ENCODE measurements at regions of chr22 and their contacts with region 1.

Region 1: DNA sequence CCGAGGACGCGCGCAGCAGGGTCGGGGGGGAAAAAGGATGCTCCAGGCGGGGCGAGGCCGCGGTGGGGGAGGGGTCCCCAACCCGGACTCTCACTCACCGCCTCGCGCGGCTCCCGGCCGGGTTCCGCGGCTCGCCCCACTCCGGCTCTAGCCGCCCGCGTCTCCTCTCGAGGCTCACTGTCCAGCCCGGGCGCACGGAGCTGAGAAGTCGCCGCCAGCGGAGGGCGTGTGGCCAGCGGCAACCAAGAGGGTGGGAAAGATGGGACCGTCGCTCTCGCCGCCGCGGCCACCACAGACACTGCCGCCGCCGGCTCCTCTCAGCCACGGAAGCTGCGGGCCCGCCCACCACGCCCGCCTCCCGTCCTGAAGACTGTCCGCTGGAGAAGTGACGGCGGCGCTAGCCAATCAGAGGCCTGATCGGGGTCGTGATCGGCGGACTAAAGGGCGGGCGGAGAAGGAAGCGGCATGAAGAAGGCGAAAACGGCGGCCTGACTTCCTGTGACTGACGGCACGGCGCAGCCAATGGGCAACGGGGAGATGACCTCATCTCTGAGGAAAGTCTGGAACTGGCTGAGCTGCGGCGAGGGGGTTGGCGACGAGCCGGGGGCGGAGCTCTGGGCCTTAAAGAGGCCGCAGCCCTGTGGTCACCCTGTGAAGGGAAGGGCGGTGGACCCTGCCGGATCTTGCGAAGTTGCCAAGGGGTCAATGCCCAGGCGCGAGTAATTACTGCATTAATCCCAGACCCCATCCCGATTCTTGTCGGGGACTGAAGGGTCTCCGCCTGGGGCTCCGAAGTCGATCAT is at the start of gene MRTFA:
- DNase-seq: peak; percentile 100
- H3K4me3 Mint-ChIP-seq: peak within 1 kb of the TSS; percentile 87
- H3K27ac Mint-ChIP-seq: peak within 1 kb of the TSS; percentile 92
- H3K4me1 Mint-ChIP-seq: peaks cover 39% of the 10 kb centered on the region
- H3K27me3 Mint-ChIP-seq: no peaks in the 10 kb centered on the region
- total RNA-seq, gene MRTFA: 47.2 to 48.9 TPM

Region 2: DNA sequence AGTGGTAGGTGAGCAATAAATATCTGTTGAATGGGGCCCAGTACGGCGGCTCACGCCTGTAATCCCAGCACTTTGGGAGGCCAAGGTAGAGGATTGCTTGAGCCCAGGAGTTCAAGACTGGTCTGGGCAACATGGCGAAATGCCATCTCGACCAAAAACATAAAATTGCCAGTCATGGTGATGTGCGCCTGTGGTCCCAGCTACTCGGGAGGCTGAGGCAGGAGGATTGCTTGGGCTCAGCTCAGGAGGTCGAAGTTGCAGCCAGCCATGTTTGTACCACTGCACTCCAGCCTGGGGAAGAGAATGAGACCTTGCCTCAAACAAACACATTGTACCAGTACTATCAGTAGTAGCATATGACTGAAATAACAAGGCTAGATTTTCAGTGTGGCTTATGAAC is 262.0 kb before region 1 on chr22:
- CTCF ChIA-PET with region 1: no interaction called
- intact Hi-C with region 1: loop called (anchors 5 kb)
- DNase-seq: no peak
- H3K4me3 Mint-ChIP-seq: no peak overlapping the region
- H3K27ac Mint-ChIP-seq: no peak overlapping the region
- H3K4me1 Mint-ChIP-seq: peaks cover 40% of the 10 kb centered on the region
- H3K27me3 Mint-ChIP-seq: no peaks in the 10 kb centered on the region

Region 3: DNA sequence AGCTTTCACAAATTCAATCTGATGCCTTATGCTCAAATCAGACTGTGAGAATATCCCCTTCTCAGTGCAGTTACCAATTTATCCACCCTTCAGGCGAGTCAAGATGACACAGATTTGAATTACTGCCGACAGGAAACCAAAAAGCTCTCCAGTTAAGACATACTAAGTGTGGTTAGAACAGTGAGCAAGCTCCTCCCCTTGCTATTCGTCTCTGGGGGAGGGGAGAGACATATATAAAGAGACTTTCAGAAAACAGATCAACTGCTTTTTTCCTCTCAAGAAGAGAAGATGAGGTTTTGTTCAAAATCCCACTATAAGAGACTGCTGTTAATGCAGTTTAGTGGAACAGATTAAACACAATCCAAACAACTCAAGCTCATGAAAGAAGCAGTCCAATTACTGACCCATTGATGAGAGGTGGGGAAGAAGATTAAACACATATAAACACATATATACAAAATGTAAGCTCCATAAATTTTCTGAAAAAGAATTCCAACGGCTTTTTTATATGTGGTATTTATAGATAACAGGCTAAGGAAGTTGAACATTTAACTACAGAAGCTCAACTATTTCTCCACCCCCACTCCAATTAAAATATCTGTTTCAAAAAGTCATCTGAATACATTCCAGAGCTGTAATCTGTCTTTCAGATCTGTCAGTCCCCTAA is 102.7 kb before region 1 on chr22:
- CTCF ChIA-PET with region 1: interaction called, 3 read pairs
- intact Hi-C with region 1: loop called (anchors 2 kb)
- DNase-seq: peak; percentile 78
- H3K4me3 Mint-ChIP-seq: peak overlapping the region; percentile 68
- H3K27ac Mint-ChIP-seq: peak overlapping the region; percentile 87
- H3K4me1 Mint-ChIP-seq: peaks cover 60% of the 10 kb centered on the region
- H3K27me3 Mint-ChIP-seq: no peaks in the 10 kb centered on the region

Region 4: DNA sequence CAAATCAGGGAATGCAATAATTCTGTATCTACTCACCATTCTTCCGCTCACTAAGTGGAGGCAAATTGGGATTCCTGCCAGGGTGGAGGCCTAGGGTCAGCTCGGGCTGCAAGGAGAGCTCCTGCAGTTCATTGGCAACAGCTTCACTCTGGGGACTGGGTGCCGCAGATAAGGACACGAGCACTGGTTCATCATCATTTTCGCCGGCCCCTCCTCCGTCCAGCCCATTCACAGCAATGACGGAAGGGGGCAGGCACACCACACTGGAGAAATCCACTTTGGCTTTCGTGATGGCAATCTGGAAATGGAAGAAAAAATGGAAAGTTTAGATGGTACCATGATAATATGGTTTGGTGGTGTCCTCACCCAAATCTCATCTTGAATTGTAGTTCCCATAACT is 84.5 kb before region 1 on chr22:
- CTCF ChIA-PET with region 1: no interaction called
- intact Hi-C with region 1: no loop called
- DNase-seq: no peak
- H3K4me3 Mint-ChIP-seq: no peak overlapping the region
- H3K27ac Mint-ChIP-seq: peak overlapping the region; percentile 16
- H3K4me1 Mint-ChIP-seq: peaks cover 15% of the 10 kb centered on the region
- H3K27me3 Mint-ChIP-seq: no peaks in the 10 kb centered on the region

Region 5: DNA sequence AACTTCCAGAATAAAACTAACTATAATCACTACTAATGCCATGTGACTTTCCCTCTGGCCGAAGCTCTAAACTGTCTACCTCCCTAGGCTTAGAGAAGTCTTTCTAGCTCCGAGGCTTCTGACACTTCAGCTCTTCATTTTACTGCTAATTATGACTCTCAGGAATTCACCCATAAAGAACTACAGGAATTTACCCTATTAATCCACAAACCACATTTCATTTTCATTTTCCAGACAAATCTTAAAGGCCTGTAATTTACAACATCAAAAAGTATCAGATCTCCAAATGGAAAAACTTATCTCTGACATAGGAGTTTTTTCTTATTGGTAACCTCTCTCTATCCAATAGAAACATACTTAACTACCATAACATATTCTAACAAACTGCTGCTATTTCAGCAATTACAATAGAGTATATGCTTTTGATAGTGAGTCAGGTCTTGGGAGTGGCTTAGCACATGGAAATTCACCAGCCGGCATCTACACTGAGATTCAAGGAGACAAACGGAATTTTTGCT is 33.4 kb before region 1 on chr22:
- CTCF ChIA-PET with region 1: no interaction called
- intact Hi-C with region 1: no loop called
- DNase-seq: no peak
- H3K4me3 Mint-ChIP-seq: no peak overlapping the region
- H3K27ac Mint-ChIP-seq: no peak overlapping the region
- H3K4me1 Mint-ChIP-seq: peaks cover 55% of the 10 kb centered on the region
- H3K27me3 Mint-ChIP-seq: no peaks in the 10 kb centered on the region

Region 6: GRCh38 chr22:40651563-40652501 is 15.3 kb after region 1 on chr22:
- CTCF ChIA-PET with region 1: interaction called, 10 read pairs
- intact Hi-C with region 1: no loop called
- DNase-seq: peak; percentile 96
- H3K4me3 Mint-ChIP-seq: peak overlapping the region; percentile 49
- H3K27ac Mint-ChIP-seq: peak overlapping the region; percentile 75
- H3K4me1 Mint-ChIP-seq: peaks cover 16% of the 10 kb centered on the region
- H3K27me3 Mint-ChIP-seq: no peaks in the 10 kb centered on the region

Region 7: GRCh38 chr22:40668611-40669411 is 32.2 kb after region 1 on chr22:
- CTCF ChIA-PET with region 1: no interaction called
- intact Hi-C with region 1: no loop called
- DNase-seq: peak; percentile 50
- H3K4me3 Mint-ChIP-seq: peak overlapping the region; percentile 33
- H3K27ac Mint-ChIP-seq: peak overlapping the region; percentile 88
- H3K4me1 Mint-ChIP-seq: peaks cover 22% of the 10 kb centered on the region
- H3K27me3 Mint-ChIP-seq: no peaks in the 10 kb centered on the region

Region 8: DNA sequence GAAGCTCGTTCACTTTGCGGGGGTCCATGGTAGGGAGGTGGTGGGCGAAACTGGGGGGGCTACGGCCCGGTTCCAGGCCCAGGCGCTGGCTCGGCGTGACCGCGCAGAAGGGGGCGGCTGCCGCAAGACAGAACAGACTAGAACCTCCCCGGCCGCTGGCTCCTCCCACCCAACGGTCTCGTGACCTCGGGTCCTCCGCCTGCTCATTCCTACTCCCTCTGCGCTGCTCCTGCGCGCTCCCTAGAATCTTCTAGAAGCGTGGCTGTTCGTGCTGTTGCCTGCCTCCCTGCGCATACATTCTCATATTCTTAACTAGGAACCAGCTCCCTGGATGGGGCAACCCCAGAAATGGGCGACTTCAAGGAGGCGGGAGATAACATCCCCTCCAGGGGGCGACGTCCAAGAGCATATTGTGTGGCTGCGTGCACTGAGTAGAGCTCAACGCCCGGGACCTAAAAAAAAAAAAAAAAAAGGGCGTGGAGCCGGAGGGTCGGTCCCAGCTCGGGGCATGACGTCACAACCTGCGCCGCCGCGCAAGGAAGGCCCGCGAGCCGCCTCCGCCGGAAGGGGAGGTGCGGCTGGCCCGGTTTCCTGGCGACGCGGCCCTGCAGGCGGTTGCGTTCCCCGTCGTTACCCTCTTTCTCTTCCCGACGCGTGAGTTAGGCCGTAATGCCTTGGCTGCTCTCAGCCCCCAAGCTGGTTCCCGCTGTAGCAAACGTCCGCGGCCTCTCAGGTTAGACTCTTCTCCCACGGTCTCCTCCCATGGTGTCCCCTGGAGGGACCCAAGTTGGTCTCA is 220.1 kb after region 1 on chr22 and contains the starts of genes ST13 and XPNPEP3:
- CTCF ChIA-PET with region 1: no interaction called
- intact Hi-C with region 1: loop called (anchors 5 kb)
- DNase-seq: peak; percentile 98
- H3K4me3 Mint-ChIP-seq: peak within 1 kb of the TSS; percentile 95
- H3K27ac Mint-ChIP-seq: peak within 1 kb of the TSS; percentile 99
- H3K4me1 Mint-ChIP-seq: peaks cover 51% of the 10 kb centered on the region
- H3K27me3 Mint-ChIP-seq: no peaks in the 10 kb centered on the region
- total RNA-seq, gene ST13: 240 to 254 TPM
- total RNA-seq, gene XPNPEP3: 15.7 to 19.6 TPM